ENCODE measurements at regions of chr13 and their contacts with region 1.

Region 1: GRCh38 chr13:110715395-110716235 is 2.1 kb downstream of the ING1 start:
- DNase-seq: peak; percentile 99
- ATAC-seq: peak; percentile 78

Region 2: GRCh38 chr13:110233181-110233950 is 482.2 kb before region 1 on chr13:
- intact Hi-C with region 1: loop called (anchors 10 kb)
- DNase-seq: peak; percentile 72
- ATAC-seq: peak; percentile 68

Region 3: DNA sequence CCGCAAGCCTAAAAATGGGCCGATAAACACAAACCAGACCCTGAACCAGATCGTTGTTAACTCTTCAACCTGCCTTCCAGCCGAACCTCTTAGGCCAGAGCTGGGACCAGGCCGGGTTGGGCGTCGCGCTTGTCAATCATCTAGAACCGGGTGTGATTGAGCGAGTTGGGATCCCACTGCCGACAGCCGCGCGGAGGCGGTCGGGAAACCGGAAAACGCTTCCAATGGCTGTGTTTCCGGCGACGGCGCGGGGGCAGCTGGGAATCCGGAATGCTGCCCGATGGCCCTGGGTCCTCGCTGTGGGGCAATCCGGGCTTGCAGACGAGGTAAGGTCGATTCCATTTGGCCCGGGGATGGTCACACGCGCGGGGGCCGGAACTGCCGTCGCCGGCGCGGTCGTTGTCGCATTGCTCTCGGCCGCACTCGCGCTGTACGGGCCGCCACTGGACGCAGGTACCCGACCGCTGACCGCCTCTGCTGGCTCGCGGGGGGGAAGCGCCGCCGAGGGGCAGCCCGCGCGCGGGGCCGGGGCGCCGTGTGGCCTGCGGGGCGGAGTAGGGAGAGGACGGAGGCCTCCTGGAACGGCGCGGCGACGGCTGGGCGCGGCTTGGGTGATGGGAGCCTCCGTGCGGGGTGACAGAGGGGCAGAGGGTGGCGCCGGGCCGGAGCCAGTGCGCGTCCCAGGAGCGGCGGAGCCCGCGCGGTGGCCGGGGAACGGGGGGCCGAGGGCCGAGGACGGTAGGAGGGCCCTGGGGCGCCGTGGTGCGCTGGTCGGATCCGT is 100.1 kb before region 1 on chr13 and contains the start of gene NAXD:
- intact Hi-C with region 1: loop called (anchors 2 kb)
- DNase-seq: peak; percentile 97
- ATAC-seq: peak; percentile 97
- total RNA-seq, gene NAXD: 27.9 TPM

Region 4: GRCh38 chr13:110797230-110797877 is 81.7 kb after region 1 on chr13:
- intact Hi-C with region 1: no loop called
- DNase-seq: no peak
- ATAC-seq: no peak

Region 5: GRCh38 chr13:110819203-110820014 is 103.8 kb after region 1 on chr13:
- intact Hi-C with region 1: loop called (anchors 2 kb)
- DNase-seq: peak; percentile 90
- ATAC-seq: peak; percentile 79